GM12878 (cell line): ENCODE measurements at regions of chr10 and their contacts with region 1.

Region 1: DNA sequence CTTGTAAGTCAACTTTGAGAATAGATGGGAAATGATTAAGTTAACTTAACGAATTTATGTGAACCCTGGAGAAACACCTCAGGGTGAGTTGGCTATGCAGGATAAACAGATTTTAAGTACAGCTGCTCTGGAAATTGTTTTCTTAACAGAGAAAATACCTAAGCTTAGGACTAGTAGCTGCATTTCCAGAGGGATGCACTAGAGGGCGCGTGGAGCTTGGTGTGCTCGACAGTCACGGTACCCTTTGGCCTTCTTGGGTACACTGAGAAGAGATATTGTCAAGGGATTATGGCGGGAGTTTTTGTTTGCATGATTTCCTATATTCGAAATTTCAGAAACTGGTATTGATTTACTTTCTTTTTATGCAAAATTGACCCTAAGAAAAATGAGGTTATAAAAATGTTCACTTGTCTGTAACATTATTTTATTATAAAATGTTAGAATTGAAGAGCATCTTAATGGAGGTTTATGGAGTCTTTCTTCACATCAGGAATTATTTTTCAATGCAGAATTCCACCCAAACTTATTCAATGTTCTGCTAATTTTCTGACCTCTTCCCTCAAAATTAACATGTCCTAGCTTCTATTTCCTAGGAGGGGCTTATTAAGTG is 58.4 kb upstream of the MYO3A start:
- DNase-seq: peak; percentile 27
- ATAC-seq: peak; percentile 94
- H3K4me3 ChIP-seq: no peak overlapping the region
- H3K27ac ChIP-seq: no peak overlapping the region
- H3K4me1 ChIP-seq: no peaks in the 10 kb centered on the region
- H3K27me3 ChIP-seq: no peaks in the 10 kb centered on the region
- CTCF ChIP-seq: peak; percentile 90 to 97 (median 91)
- EP300 ChIP-seq: no peak
- POLR2A ChIP-seq: no peak
- RAD21 ChIP-seq: peak; percentile 96

Region 2: GRCh38 chr10:25582961-25583360 is 292.7 kb before region 1 on chr10:
- CTCF ChIA-PET with region 1: no interaction called
- POLR2A ChIA-PET with region 1: no interaction called
- RAD21 ChIA-PET with region 1: no interaction called
- SMC1A ChIA-PET with region 1: no interaction called
- in situ Hi-C with region 1: no loop called
- intact Hi-C with region 1: no loop called
- DNase-seq: no peak
- ATAC-seq: no peak
- H3K4me3 ChIP-seq: no peak overlapping the region
- H3K27ac ChIP-seq: no peak overlapping the region
- H3K4me1 ChIP-seq: no peaks in the 10 kb centered on the region
- H3K27me3 ChIP-seq: no peaks in the 10 kb centered on the region
- CTCF ChIP-seq: no peak
- EP300 ChIP-seq: no peak
- POLR2A ChIP-seq: no peak
- RAD21 ChIP-seq: no peak

Region 3: GRCh38 chr10:25849988-25850387 is 25.7 kb before region 1 on chr10:
- CTCF ChIA-PET with region 1: interaction called, 15 read pairs
- POLR2A ChIA-PET with region 1: no interaction called
- RAD21 ChIA-PET with region 1: no interaction called
- SMC1A ChIA-PET with region 1: interaction called, 3 read pairs
- in situ Hi-C with region 1: no loop called
- intact Hi-C with region 1: no loop called
- DNase-seq: no peak
- ATAC-seq: no peak
- H3K4me3 ChIP-seq: no peak overlapping the region
- H3K27ac ChIP-seq: no peak overlapping the region
- H3K4me1 ChIP-seq: no peaks in the 10 kb centered on the region
- H3K27me3 ChIP-seq: no peaks in the 10 kb centered on the region
- CTCF ChIP-seq: no peak
- EP300 ChIP-seq: no peak
- POLR2A ChIP-seq: no peak
- RAD21 ChIP-seq: no peak

Region 4: GRCh38 chr10:26269754-26270153 is 394.1 kb after region 1 on chr10:
- CTCF ChIA-PET with region 1: interaction called, 18 read pairs
- POLR2A ChIA-PET with region 1: no interaction called
- RAD21 ChIA-PET with region 1: interaction called, 6 read pairs
- SMC1A ChIA-PET with region 1: interaction called, 18 read pairs
- in situ Hi-C with region 1: no loop called
- intact Hi-C with region 1: loop called (anchors 1 kb)
- DNase-seq: no peak
- ATAC-seq: peak; percentile 52; the same call in 2 of the 3 replicates
- H3K4me3 ChIP-seq: no peak overlapping the region
- H3K27ac ChIP-seq: no peak overlapping the region
- H3K4me1 ChIP-seq: no peaks in the 10 kb centered on the region
- H3K27me3 ChIP-seq: peaks cover 0 to 1% of the 10 kb centered on the region in 2 experiments; a peak in 2 of 4 replicates
- CTCF ChIP-seq: peak; percentile 12 to 36 (median 25); a peak in 4 of 6 replicates
- EP300 ChIP-seq: no peak
- POLR2A ChIP-seq: no peak
- RAD21 ChIP-seq: peak; percentile 53

Region 5: GRCh38 chr10:26556748-26557640 is 681.3 kb after region 1 on chr10:
- CTCF ChIA-PET with region 1: interaction called, 5 read pairs
- POLR2A ChIA-PET with region 1: no interaction called
- RAD21 ChIA-PET with region 1: interaction called, 4 read pairs
- SMC1A ChIA-PET with region 1: interaction called, 3 read pairs
- in situ Hi-C with region 1: loop called (anchors 10 kb)
- intact Hi-C with region 1: loop called (anchors 2 kb)
- DNase-seq: no peak
- ATAC-seq: peak; percentile 72
- H3K4me3 ChIP-seq: no peak overlapping the region
- H3K27ac ChIP-seq: no peak overlapping the region
- H3K4me1 ChIP-seq: no peaks in the 10 kb centered on the region
- H3K27me3 ChIP-seq: no peaks in the 10 kb centered on the region
- CTCF ChIP-seq: peak; percentile 87 to 96 (median 88)
- EP300 ChIP-seq: no peak
- POLR2A ChIP-seq: no peak
- RAD21 ChIP-seq: peak; percentile 99